ENCODE measurements at regions of chr4 and their contacts with region 1.

Region 1: GRCh38 chr4:140756319-140757231 is at the start of gene TBC1D9:
- DNase-seq: peak; percentile 84 to 93
- ATAC-seq: peak; percentile 85 to 93 (median 90)
- H3K4me3 ChIP-seq: peak within 1 kb of the TSS; percentile 65 to 95 (median 85)
- H3K27ac ChIP-seq: peak within 1 kb of the TSS; percentile 87 to 100 (median 98)
- H3K4me1 ChIP-seq: peaks cover 0 to 47% (median 31%) of the 10 kb centered on the region in 9 donors
- H3K27me3 ChIP-seq: peaks cover 0 to 14% (median 0%) of the 10 kb centered on the region in 7 donors
- CTCF ChIP-seq: peak in 2 of 9 donors; percentile 13 to 25
- total RNA-seq, gene TBC1D9: 9.9 to 20.3 (median 14.6) TPM

Region 2: GRCh38 chr4:140523857-140524742 is 232.5 kb before region 1 on chr4 and contains the start of gene ELMOD2:
- intact Hi-C with region 1: loop called in 3 of 10 experiments (anchors 10 kb)
- DNase-seq: peak; percentile 99
- ATAC-seq: peak; percentile 100
- H3K4me3 ChIP-seq: peak within 1 kb of the TSS; percentile 66 to 98 (median 86)
- H3K27ac ChIP-seq: peak within 1 kb of the TSS; percentile 38 to 94 (median 87)
- H3K4me1 ChIP-seq: peaks cover 0 to 40% (median 18%) of the 10 kb centered on the region in 9 donors
- H3K27me3 ChIP-seq: no peaks in the 10 kb centered on the region
- CTCF ChIP-seq: peak; percentile 82 to 99 (median 94)
- total RNA-seq, gene ELMOD2: 14.3 to 20.3 (median 17.4) TPM

Region 3: DNA sequence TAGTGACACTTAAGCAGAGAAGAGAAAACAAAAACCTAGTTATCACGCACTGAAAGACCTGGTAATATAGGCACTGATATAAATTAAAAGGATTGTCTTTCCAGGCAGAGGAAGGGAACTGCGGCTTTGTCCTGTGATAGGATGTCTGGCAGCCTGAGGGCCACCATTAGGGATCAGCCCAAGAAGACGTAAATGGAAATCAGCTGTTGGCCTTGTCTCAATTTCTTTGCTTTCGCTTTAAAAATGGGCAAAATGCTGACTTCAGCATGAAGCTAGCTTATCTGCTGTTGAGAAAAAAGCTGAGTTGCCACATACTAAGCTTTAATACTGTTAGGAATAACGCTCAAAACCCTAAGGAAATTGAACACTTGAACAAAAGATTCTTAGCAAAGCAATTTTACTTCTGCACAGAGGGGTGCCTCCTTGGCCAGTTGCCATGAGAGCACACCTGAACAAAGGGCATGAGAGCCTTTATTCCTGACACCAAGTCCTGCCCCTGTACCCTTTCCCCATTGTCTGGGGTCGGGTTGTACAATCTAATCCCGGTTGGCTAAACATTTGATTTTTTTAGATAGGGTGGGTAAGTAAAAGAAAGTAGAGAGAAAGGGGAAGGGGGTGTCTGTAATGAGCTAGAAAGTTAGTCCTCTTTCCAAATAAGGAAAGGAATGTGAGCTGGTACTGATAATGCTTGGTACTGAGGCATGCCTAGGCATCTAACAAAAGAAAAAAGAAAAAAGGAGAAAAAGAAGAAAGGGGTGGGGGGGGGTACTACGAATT is 102.7 kb before region 1 on chr4:
- intact Hi-C with region 1: loop called in 3 of 10 experiments (anchors 10 kb)
- DNase-seq: no peak
- ATAC-seq: peak in 6 of 8 donors; percentile 52 to 72 (median 59)
- H3K4me3 ChIP-seq: peak overlapping the region in 4 of 10 donors; percentile 6 to 26 (median 16)
- H3K27ac ChIP-seq: no peak overlapping the region
- H3K4me1 ChIP-seq: peaks cover 0 to 9% (median 4%) of the 10 kb centered on the region in 9 donors
- H3K27me3 ChIP-seq: no peaks in the 10 kb centered on the region
- CTCF ChIP-seq: no peak

Region 4: GRCh38 chr4:140697709-140698560 is 58.6 kb before region 1 on chr4:
- intact Hi-C with region 1: loop called in 2 of 10 experiments (anchors 5 kb)
- DNase-seq: no peak
- ATAC-seq: peak in 1 of 8 donors; percentile 13
- H3K4me3 ChIP-seq: no peak overlapping the region
- H3K27ac ChIP-seq: no peak overlapping the region
- H3K4me1 ChIP-seq: peaks cover 0 to 40% (median 32%) of the 10 kb centered on the region in 9 donors
- H3K27me3 ChIP-seq: no peaks in the 10 kb centered on the region
- CTCF ChIP-seq: no peak

Region 5: GRCh38 chr4:140807491-140808252 is 51.1 kb after region 1 on chr4:
- intact Hi-C with region 1: no loop called
- DNase-seq: no peak
- ATAC-seq: peak in 6 of 8 donors; percentile 35 to 77 (median 63)
- H3K4me3 ChIP-seq: no peak overlapping the region
- H3K27ac ChIP-seq: peak overlapping the region in 5 of 10 donors; percentile 5 to 70 (median 37)
- H3K4me1 ChIP-seq: peaks cover 0 to 41% (median 12%) of the 10 kb centered on the region in 9 donors
- H3K27me3 ChIP-seq: no peaks in the 10 kb centered on the region
- CTCF ChIP-seq: no peak

Region 6: DNA sequence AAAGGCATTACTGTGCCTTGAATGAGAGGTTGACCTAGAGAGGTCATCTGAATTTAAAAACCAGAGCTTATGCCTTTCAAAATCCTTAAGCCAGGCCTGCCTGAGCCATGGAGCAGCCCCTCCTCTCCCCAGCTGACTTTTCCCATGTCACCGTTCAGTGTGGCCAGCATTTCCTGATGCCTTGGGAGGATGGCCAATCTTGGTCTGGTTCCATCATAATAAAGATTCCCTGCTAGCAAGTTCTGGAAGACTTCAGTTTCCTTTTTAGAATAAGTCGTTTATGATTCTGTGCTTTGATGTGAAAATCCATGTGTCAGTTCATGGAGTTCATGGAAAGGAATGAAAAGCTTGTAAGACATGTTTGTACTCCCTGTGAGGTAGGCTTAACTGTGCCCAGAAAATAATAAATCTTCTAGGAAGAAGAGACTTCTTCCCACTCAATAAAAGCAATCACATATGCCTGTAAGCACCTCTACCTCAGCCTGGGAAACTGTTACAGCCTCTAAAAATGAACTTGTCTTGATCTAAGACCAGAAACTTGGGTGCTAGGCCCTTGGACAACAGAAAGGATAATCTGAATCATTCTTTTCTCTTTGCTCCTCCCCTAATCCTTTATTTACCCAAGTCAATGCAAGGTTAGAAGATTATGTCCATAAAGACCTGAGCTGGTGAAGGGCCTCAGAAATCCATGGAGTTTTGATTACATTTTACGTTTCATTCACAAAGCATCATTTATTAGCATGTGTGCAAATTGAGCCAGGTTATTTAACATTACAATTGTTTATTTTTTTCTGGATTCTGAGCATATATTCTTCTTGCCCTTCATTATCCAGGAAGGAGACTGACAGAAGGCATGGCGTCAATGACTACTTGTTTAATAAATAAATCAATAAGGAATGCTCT is 83.6 kb after region 1 on chr4:
- intact Hi-C with region 1: loop called in 4 of 10 experiments (anchors 5 to 10 kb)
- DNase-seq: no peak
- ATAC-seq: peak in 4 of 8 donors; percentile 27 to 73 (median 45)
- H3K4me3 ChIP-seq: no peak overlapping the region
- H3K27ac ChIP-seq: peak overlapping the region in 3 of 10 donors; percentile 19 to 36 (median 24)
- H3K4me1 ChIP-seq: peaks cover 0 to 31% (median 7%) of the 10 kb centered on the region in 9 donors
- H3K27me3 ChIP-seq: no peaks in the 10 kb centered on the region
- CTCF ChIP-seq: no peak

Measured in heart right ventricle (tissue), 16 donors.